SK-N-SH (cell line): ENCODE measurements at regions of chr3 and their contacts with region 1.

Region 1: DNA sequence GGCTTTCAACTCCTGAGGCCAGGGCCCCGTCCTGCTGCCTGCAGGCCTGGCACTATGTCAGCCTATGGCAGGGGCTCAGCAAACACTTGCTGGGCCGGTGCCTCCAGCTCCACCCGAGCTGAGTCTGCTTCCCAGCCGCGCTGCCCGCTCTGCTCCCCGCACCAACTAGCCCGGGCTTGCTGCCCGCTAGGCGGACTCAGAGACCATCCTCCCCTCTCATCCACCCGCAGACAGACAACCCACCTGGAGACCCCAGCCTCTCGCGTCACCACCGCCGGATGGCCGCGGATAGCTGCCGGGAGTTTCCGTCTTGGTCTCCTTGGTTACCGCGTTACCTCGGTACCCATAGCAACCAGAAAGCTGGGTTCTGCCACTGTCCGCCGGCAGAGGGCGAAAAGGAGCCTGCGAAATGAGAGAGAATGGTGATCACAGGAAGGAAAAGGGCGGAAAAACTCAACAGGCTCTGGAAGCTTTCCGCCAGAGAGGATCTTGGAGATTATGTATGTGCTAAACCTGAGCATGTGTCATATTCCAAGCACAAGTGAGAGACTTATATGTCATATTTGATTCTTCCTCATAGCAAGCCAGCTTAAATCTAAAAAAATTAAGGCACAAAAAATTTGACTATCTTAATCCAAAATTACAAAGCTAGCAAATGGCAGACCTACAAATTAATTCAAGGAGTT is at the start of gene ZBBX:
- DNase-seq: peak; percentile 71
- H3K4me3 ChIP-seq: peak within 1 kb of the TSS; percentile 68 to 73
- H3K27ac ChIP-seq: no peak within 1 kb of the TSS
- H3K4me1 ChIP-seq: no peaks in the 10 kb centered on the region; a peak in 1 of 4 replicates
- H3K27me3 ChIP-seq: no peaks in the 10 kb centered on the region
- CTCF ChIP-seq: peak; percentile 93
- EP300 ChIP-seq: no peak
- RAD21 ChIP-seq: peak; percentile 71
- polyA plus RNA-seq, gene ZBBX: 0.18 and 0.50 TPM in 2 replicates

Region 2: DNA sequence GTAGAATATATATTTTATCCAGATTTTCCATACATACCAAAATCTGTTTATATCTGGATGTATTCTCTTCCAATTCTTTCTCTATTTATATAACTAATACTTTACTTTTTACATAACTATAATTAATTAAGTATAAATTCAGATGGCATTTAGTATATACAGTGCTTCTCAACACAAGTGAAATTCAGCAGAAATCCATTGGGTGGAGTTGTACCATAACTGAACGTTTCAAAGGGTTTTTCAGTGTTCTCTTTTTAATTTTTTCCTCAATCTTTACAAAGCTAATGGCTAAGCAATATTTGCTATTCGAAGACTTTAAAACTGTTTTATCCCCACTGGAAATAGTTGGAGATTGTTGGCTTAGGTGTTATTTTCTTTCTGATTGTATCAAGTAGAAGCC is 13.9 kb after region 1 on chr3:
- CTCF ChIA-PET with region 1: interaction called, 12 read pairs
- POLR2A ChIA-PET with region 1: no interaction called
- DNase-seq: no peak
- H3K4me3 ChIP-seq: no peak overlapping the region
- H3K27ac ChIP-seq: no peak overlapping the region
- H3K4me1 ChIP-seq: no peaks in the 10 kb centered on the region
- H3K27me3 ChIP-seq: no peaks in the 10 kb centered on the region
- CTCF ChIP-seq: peak; percentile 21; the same call in 1 of the 2 replicates
- EP300 ChIP-seq: no peak
- RAD21 ChIP-seq: peak; percentile 42; the same call in 1 of the 2 replicates

Region 3: GRCh38 chr3:167740961-167741587 is 360.9 kb after region 1 on chr3:
- CTCF ChIA-PET with region 1: interaction called, 16 read pairs
- POLR2A ChIA-PET with region 1: no interaction called
- DNase-seq: peak; percentile 51
- H3K4me3 ChIP-seq: no peak overlapping the region
- H3K27ac ChIP-seq: no peak overlapping the region
- H3K4me1 ChIP-seq: no peaks in the 10 kb centered on the region; a peak in 1 of 4 replicates
- H3K27me3 ChIP-seq: no peaks in the 10 kb centered on the region
- CTCF ChIP-seq: peak; percentile 58
- EP300 ChIP-seq: no peak
- RAD21 ChIP-seq: peak; percentile 70

Region 4: DNA sequence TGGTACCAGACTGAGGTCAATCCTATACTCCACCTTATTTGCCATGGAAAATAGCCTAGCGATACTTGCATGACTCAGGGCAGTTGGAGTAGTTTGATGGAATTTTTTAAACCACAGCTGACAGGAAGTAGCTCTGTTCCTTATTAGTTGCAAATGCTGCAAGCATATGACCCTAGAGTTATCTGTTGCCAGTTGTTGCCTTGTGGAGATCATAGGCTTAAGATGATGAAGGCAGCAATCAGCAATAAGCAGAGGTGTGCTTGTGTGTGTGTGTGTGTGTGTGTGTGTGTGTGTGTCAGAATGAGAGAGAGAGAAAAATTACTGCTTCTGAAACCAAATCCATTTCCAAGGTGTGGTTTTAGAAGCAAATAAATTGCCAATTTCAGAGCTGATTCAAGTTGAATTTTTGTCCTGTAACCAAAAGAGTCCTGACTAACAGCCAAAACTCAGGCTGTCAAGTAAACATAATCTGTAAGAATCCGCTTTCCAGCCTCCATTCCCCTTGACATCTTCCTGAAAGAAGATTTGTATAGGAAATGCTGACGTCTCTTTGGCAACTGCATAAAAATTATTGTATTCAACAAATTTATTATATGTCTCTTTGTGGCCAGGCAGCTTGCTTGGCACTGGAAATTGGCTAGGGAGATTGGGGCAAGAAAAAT is 496.6 kb after region 1 on chr3:
- CTCF ChIA-PET with region 1: interaction called, 29 read pairs
- POLR2A ChIA-PET with region 1: no interaction called
- DNase-seq: no peak
- H3K4me3 ChIP-seq: no peak overlapping the region
- H3K27ac ChIP-seq: peak overlapping the region in 1 of 2 experiments; percentile 31; a peak in 1 of 4 replicates
- H3K4me1 ChIP-seq: no peaks in the 10 kb centered on the region; a peak in 1 of 4 replicates
- H3K27me3 ChIP-seq: no peaks in the 10 kb centered on the region
- CTCF ChIP-seq: no peak
- EP300 ChIP-seq: no peak
- RAD21 ChIP-seq: no peak

Region 5: GRCh38 chr3:167882067-167882667 is 502.0 kb after region 1 on chr3:
- CTCF ChIA-PET with region 1: interaction called, 29 read pairs
- POLR2A ChIA-PET with region 1: no interaction called
- DNase-seq: peak; percentile 21
- H3K4me3 ChIP-seq: no peak overlapping the region; a peak in 1 of 4 replicates
- H3K27ac ChIP-seq: no peak overlapping the region
- H3K4me1 ChIP-seq: no peaks in the 10 kb centered on the region; a peak in 1 of 4 replicates
- H3K27me3 ChIP-seq: no peaks in the 10 kb centered on the region
- CTCF ChIP-seq: peak; percentile 76
- EP300 ChIP-seq: no peak
- RAD21 ChIP-seq: peak; percentile 75